ENCODE measurements at regions of chr13 and their contacts with region 1.

Region 1: GRCh38 chr13:97432917-97433726 is 847 bp upstream of the RAP2A start:
- DNase-seq: peak; percentile 99

Region 2: DNA sequence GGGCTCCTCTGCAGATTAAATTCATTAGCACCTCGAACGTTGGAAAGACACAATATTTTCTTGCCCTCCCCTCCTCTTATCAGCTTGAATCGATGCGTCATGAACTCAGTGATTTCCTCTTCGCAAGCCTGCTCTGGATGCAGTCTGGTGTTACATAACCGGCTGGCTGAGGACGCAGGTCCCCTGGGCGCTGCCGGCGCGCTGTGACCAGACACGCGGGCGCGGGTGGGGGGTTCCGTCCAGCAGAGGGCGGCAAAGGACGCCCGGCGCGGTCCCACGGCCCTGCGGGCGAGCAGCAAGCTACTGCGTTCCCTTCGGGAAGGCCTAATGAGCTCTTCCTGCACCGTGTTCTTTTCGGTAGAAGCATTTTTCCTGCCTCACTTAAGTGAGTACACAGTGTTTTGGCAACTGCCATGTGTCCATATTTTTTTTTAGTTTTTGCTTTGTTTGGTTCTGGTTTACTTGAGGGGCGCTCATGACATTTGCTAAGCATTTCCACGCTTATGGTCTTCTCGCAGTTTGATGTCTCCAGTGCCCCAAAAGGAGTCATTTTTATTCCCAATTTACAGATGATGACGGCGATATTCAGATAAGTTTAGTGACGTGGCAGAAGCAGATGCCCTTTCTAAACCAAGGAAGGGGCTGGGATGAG is 323.2 kb before region 1 on chr13:
- intact Hi-C with region 1: loop called (anchors 5 kb)
- DNase-seq: peak; percentile 93

Region 3: GRCh38 chr13:97221989-97222700 is 211.0 kb before region 1 on chr13 and contains the start of gene MBNL2:
- intact Hi-C with region 1: loop called (anchors 5 kb)
- DNase-seq: peak; percentile 95
- total RNA-seq, gene MBNL2: 67.6 TPM

Region 4: DNA sequence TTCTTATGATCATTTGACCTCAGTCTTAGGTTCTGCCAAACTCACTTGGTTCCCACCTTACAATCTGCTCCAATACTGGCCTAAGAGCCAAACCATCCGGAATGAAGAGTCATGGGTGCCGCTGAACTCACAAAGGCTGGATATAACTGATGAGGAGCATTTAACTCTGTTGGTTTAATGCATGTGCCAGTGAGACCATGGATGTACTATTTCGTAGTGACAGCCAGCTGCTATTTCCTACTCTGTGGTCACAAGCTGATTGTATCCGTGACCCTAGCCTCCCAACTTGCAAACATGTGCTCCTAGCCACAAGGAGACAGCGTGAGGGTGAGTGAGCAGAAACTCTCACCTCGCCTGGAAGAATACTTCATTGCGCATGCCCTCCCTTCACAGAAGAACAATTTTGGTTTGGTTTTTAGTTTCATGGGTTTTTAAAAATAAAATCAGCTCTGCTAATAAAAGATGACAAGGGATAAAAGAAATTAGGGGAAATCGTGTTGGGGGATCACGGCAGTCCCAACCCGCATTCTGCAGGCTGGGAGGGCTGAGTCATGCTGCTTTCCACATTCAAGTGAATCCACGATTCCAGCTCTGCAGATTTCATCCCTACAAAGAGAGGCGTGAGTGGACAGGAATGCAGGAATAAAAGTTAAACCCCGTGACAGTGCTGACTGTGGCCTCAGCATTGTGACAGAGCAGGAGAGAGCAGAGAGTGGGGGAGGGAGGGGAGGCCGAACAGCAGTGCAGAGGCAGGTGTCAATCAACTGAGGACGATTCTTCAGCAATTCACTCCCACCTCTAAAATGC is 65.9 kb before region 1 on chr13:
- intact Hi-C with region 1: loop called (anchors 5 kb)
- DNase-seq: no peak

Region 5: DNA sequence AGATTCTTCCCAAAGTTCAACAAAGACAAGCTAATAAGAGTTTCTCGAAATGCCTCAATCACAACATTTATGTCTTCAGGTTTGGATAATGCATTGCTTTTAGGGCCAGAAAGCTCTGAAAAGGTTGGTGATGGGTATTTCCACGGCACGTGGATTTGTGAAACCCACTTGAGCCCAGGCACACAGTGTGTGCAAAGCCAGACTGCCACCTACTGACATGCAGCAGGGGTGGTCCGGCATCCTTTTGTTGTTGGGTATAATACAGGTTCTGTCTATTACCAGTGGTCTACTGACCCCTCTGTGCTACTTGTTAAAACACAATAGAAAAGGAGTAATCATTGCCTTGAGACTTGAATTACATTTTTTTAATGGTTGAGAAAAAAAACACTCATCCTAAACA is 226.5 kb after region 1 on chr13:
- intact Hi-C with region 1: loop called (anchors 5 kb)
- DNase-seq: no peak